H1 (cell line): ENCODE measurements at regions of chr2 and their contacts with region 1.

Region 1: DNA sequence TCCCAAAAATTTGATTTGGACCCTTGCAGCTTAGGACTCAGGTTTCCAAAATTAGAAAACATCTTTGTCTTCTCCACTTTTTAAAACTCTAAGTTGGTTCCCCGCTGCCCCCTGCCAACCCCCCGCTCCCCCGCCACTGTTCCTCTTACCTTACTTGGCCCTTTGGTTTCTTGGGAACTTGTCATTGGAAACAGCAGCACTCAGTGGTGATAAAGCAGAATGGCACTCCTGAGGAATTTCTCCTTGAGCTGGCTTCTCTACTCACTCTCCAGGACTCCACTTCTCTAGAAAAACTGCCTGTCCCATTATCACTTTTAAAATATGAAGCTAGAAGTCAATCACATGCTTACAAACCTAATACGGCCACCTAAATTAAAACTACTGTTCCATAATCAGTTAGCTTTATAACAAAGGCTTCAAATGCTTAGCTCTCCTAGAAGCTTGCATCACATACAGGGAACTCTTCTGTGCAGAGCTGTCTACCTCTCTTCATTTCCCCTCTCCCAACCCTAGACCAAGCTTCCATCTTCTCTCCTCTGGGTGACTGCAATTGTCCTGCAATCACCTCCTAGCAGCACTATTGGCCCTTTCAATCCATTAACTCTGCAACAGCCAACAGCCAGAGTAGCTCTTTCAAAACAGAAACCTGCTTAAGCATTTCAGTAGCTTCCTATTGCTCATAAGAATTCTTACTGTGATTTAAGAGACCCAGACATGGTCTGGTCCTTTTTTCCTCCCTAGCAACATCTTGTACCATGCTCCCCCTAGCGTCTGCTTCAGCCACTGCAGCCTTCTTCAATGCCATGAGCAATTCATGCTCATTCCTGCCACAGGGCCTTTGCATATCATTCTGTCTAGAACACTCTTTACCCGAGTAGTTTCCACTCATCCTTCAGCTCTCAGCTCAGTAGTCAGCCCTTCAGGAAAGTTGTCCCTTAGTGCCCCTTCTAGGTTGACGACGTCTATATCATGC is 15.2 kb upstream of the PLEKHM3 start:
- DNase-seq: peak in 1 of 2 experiments; percentile 84
- H3K4me3 ChIP-seq: no peak overlapping the region
- H3K27ac ChIP-seq: no peak overlapping the region
- H3K4me1 ChIP-seq: peaks cover 0 to 13% (median 7%) of the 10 kb centered on the region in 4 experiments; a peak in 2 of 7 replicates
- H3K27me3 ChIP-seq: no peaks in the 10 kb centered on the region
- CTCF ChIP-seq: peak; percentile 62 to 94 (median 69)
- EP300 ChIP-seq: no peak
- POLR2A ChIP-seq: no peak
- RAD21 ChIP-seq: peak; percentile 77 to 79

Region 2: DNA sequence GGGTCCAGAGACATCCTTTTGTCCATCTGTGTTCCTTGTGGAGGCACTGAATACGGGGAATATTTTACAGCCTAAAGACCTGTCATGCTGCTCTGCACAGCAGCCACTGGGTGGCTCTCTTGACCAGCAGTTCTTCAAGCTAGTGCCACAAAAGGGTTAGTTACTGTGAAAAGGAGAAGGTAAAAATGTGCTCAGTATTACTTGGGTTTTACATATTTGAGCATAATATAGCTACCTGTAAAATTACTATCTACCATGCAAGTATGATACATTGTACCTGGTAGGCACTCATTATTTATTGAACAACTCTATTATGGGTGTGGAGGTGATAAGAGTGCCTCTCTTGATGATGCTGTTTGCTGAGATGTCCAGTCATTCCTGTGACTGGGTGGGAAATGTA is 294.4 kb before region 1 on chr2:
- CTCF ChIA-PET with region 1: interaction called, 157 read pairs
- POLR2A ChIA-PET with region 1: interaction called, 12 read pairs
- DNase-seq: no peak
- H3K4me3 ChIP-seq: no peak overlapping the region
- H3K27ac ChIP-seq: no peak overlapping the region
- H3K4me1 ChIP-seq: peaks cover 0 to 5% (median 0%) of the 10 kb centered on the region in 4 experiments; a peak in 1 of 7 replicates
- H3K27me3 ChIP-seq: no peaks in the 10 kb centered on the region
- CTCF ChIP-seq: peak; percentile 70 to 96 (median 95)
- EP300 ChIP-seq: no peak
- POLR2A ChIP-seq: no peak
- RAD21 ChIP-seq: peak; percentile 100

Region 3: GRCh38 chr2:207813221-207813916 is 227.1 kb before region 1 on chr2:
- CTCF ChIA-PET with region 1: interaction called, 21 read pairs
- POLR2A ChIA-PET with region 1: no interaction called
- DNase-seq: no peak
- H3K4me3 ChIP-seq: peak overlapping the region in 1 of 4 experiments; percentile 31; a peak in 1 of 8 replicates
- H3K27ac ChIP-seq: no peak overlapping the region
- H3K4me1 ChIP-seq: peaks cover 6 to 30% (median 25%) of the 10 kb centered on the region in 4 experiments; a peak in 6 of 7 replicates
- H3K27me3 ChIP-seq: no peaks in the 10 kb centered on the region
- CTCF ChIP-seq: no peak
- EP300 ChIP-seq: no peak
- POLR2A ChIP-seq: no peak
- RAD21 ChIP-seq: no peak

Region 4: GRCh38 chr2:207914716-207915115 is 125.8 kb before region 1 on chr2:
- CTCF ChIA-PET with region 1: interaction called, 11 read pairs
- POLR2A ChIA-PET with region 1: no interaction called
- DNase-seq: no peak
- H3K4me3 ChIP-seq: no peak overlapping the region
- H3K27ac ChIP-seq: no peak overlapping the region
- H3K4me1 ChIP-seq: no peaks in the 10 kb centered on the region
- H3K27me3 ChIP-seq: no peaks in the 10 kb centered on the region; a peak in 1 of 7 replicates
- CTCF ChIP-seq: no peak
- EP300 ChIP-seq: no peak
- POLR2A ChIP-seq: no peak
- RAD21 ChIP-seq: no peak

Region 5: GRCh38 chr2:207974216-207974605 is 66.3 kb before region 1 on chr2:
- CTCF ChIA-PET with region 1: interaction called, 26 read pairs
- POLR2A ChIA-PET with region 1: no interaction called
- DNase-seq: no peak
- H3K4me3 ChIP-seq: no peak overlapping the region
- H3K27ac ChIP-seq: no peak overlapping the region
- H3K4me1 ChIP-seq: peaks cover 3 to 28% (median 9%) of the 10 kb centered on the region in 4 experiments; a peak in 5 of 7 replicates
- H3K27me3 ChIP-seq: no peaks in the 10 kb centered on the region
- CTCF ChIP-seq: no peak
- EP300 ChIP-seq: no peak
- POLR2A ChIP-seq: no peak
- RAD21 ChIP-seq: no peak

Region 6: DNA sequence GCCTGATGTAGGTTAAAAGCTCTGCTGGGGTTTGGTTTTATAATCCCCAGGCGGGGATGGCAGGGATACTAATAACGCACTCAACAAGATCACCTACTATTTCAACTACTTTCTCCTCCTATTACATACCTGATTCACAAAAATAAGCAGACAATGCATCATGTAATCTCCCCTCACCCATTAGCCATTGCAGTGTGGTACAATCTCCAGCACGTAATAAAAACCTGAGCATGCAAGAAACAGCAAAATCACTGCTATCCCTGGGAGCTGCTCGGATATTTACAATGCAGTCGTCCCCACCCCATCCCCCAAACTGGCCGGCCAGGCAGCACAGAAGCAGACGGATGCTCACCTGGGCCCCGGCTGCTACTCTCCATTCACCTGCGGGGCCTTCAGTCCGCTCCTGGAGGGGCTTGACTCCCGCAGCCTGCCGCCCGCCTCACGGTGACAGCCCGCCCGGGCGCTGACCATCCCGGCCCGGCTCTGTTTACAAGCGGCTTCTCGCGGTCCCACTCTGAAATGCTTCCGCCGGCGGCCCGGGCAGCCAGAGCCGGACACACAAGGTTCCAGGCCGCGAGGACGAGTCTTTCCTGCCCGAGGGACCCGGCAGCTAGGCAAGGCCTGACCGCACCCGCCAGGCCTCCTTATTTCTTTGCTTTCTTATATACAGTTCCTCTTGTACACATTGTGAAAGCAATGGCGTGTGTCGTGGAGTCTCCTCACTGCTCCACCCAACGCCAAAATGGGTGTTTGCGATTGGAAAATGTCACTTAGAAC is 15.3 kb before region 1 on chr2 and contains the start of gene PLEKHM3:
- CTCF ChIA-PET with region 1: interaction called, 73 read pairs
- POLR2A ChIA-PET with region 1: no interaction called
- DNase-seq: peak in 1 of 2 experiments; percentile 95
- H3K4me3 ChIP-seq: peak within 1 kb of the TSS; percentile 72 to 90 (median 84)
- H3K27ac ChIP-seq: peak within 1 kb of the TSS; percentile 61; the same call in 1 of the 2 replicates
- H3K4me1 ChIP-seq: peaks cover 0 to 5% (median 4%) of the 10 kb centered on the region in 4 experiments; a peak in 5 of 7 replicates
- H3K27me3 ChIP-seq: no peaks in the 10 kb centered on the region
- CTCF ChIP-seq: no peak
- EP300 ChIP-seq: peak; percentile 37 to 77; a peak in 2 of 3 replicates
- POLR2A ChIP-seq: peak; percentile 62 to 78
- RAD21 ChIP-seq: peak; percentile 23 to 47; a peak in 3 of 4 replicates
- total RNA-seq, gene PLEKHM3: 4.6 and 5.8 TPM in 2 replicates

Region 7: GRCh38 chr2:208103616-208104015 is 63.1 kb after region 1 on chr2:
- CTCF ChIA-PET with region 1: no interaction called
- POLR2A ChIA-PET with region 1: no interaction called
- DNase-seq: no peak
- H3K4me3 ChIP-seq: no peak overlapping the region
- H3K27ac ChIP-seq: no peak overlapping the region
- H3K4me1 ChIP-seq: peaks cover 2 to 6% (median 4%) of the 10 kb centered on the region in 4 experiments; a peak in 5 of 7 replicates
- H3K27me3 ChIP-seq: no peaks in the 10 kb centered on the region; a peak in 1 of 7 replicates
- CTCF ChIP-seq: no peak
- EP300 ChIP-seq: no peak
- POLR2A ChIP-seq: no peak
- RAD21 ChIP-seq: no peak

Region 8: DNA sequence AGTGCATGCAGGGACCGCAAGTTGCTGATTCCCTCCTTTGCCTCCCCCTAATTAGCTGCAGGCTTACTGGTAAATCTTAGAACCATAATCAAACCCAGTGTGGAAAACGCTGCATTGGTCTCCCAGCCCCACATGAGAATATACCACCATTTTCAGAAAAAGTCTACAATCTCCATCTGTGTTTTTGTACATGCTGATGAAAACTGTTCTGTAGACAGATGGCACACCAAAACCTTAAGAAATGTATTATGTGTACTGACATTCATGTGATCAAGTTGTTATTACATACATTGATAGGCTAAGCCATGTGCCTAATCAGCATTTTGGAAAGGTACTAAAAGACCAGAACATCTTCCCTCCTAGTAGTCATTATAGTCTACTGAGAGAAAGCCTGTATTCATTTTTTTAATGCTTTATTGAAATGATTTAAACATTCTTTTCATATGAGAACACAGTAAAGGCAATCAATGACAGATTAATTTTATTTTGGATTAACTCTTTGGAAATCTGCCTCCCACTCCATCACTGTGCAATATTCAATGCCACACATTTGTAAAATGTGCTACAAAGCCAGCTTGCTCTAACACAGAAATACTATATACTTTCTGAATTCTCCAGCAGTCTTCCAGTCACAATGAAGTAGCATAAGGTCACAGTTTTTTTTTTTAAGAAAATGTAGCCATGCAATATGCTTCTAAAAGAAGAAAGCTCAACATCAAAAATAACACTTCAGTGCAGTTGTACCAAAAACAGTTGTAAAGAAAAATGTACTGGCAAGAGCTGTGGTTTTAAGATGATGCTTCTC is 124.7 kb after region 1 on chr2:
- CTCF ChIA-PET with region 1: no interaction called
- POLR2A ChIA-PET with region 1: no interaction called
- DNase-seq: no peak
- H3K4me3 ChIP-seq: no peak overlapping the region
- H3K27ac ChIP-seq: no peak overlapping the region
- H3K4me1 ChIP-seq: no peaks in the 10 kb centered on the region
- H3K27me3 ChIP-seq: no peaks in the 10 kb centered on the region
- CTCF ChIP-seq: no peak
- EP300 ChIP-seq: no peak
- POLR2A ChIP-seq: no peak
- RAD21 ChIP-seq: no peak